Astrocyte of the cerebellum (primary cell): ENCODE measurements at regions of chr4 and their contacts with region 1.

Region 1: GRCh38 chr4:77036206-77036605 is 39.6 kb downstream of the CCNI start:
- DNase-seq: peak; percentile 97
- H3K4me3 ChIP-seq: no peak overlapping the region
- CTCF ChIP-seq: no peak

Region 2: GRCh38 chr4:76787898-76788297 is 248.3 kb before region 1 on chr4:
- in situ Hi-C with region 1: loop called (anchors 5 kb)
- DNase-seq: no peak
- H3K4me3 ChIP-seq: no peak overlapping the region
- CTCF ChIP-seq: no peak

Region 3: DNA sequence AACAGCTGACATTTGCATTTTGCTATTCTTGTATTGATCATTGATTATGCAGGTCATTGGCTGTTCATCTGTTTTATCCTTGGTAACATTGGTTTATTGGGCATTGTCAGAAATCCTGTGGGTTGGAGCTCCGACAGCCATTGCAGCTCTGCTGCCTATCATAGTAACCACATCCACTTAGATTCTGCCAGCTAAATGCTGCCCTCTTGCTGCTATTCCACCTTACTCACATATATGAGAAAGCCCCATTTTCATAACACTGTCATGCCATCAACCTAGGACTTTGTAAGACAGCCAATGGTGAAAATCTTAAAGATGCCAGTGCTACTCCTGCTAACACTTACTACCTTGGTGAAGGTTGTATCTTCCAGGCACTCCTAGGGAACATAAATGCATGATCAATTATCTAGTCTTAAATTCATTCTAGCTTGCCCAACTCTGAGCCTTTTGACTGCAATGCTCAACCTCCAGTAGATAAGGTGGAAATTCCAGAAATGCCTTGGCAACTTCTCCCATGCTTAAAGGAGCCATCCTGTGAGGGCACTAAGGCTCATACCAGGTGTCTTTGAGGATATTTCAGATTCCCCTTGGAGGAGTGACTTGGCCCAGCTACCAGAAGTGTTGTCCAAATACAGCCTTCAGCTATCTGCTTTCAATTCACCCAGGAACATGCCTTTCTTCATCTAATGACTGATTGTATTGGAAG is 382.3 kb after region 1 on chr4:
- in situ Hi-C with region 1: no loop called
- DNase-seq: no peak
- H3K4me3 ChIP-seq: no peak overlapping the region
- CTCF ChIP-seq: peak; percentile 10